ENCODE measurements at regions of chr4 and their contacts with region 1.

Region 1: DNA sequence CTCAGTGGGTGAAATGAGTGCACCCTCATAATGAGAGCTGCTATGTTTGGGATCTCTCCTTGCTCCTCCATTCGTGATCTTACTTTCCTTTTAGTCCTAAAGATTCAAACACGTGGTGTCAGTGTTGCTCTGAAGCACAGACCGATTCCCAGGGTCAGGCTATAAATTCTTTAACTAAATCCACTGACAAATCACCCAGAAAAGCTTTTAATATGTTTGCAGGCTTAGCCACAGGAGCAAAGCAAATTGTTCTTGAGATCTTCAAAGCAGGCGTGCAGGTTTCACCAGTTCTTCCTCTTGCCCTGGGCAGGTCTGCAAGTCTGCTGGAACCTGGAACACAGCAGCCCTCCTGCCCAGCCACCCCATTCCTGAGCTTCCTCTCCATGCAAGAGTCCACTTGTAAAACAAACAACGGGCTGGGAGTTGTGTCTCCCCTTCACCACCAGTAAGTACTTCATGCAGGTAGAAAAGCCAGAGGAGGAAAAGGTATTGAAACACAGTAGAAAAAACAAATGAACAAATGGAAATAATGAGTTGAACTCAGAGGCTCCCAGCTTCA is 70.1 kb upstream of the ENPP6 start:
- DNase-seq: no peak
- ATAC-seq: peak; percentile 79 to 87

Region 2: GRCh38 chr4:183729430-183730328 is 558.1 kb before region 1 on chr4:
- intact Hi-C with region 1: no loop called
- DNase-seq: no peak
- ATAC-seq: no peak

Region 3: DNA sequence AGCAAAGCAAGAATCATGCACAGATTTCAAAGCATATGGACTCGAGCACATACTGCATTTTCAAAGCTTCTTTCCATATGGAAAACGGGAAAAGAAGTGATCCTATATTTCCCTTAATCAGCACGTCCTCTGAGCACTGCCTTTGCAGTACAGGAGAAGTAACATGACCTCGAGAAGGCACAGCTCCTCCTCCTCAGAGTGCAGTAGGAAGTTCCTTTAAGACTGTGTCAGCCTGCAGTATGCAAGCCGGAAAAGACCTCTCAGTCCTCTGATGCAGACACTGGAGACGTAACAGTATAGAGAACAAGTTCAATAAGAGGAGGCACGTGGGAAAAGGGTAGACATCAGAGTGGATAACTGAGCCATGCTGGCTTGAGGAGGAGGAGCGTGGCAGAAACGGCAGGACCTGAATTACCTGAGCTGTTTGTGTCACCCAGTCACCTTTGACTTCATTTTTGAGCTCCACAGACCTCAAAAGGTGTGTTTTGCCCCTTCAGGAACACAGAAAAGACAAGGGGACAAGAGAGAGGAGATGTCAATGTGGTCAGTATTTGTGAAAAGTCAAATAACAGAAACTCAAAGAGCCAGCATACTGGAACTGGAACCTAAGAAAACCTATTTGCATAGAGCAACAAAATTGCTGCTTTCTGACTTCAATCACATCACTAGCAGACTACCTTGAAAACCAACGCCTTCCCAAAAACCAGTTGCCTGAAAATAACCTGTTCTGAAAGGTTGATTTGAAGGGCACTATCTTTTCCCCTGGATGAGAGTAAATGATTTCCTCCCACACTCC is 165.8 kb after region 1 on chr4:
- intact Hi-C with region 1: no loop called
- DNase-seq: no peak
- ATAC-seq: peak; percentile 38 to 70

Region 4: GRCh38 chr4:184544788-184545409 is 257.1 kb after region 1 on chr4:
- intact Hi-C with region 1: loop called in 1 of 2 experiments (anchors 5 kb)
- DNase-seq: no peak
- ATAC-seq: no peak